Naive thymus-derived CD4-positive, alpha-beta T cell (primary cell): ENCODE measurements at regions of chr12 and their contacts with region 1.

Region 1: DNA sequence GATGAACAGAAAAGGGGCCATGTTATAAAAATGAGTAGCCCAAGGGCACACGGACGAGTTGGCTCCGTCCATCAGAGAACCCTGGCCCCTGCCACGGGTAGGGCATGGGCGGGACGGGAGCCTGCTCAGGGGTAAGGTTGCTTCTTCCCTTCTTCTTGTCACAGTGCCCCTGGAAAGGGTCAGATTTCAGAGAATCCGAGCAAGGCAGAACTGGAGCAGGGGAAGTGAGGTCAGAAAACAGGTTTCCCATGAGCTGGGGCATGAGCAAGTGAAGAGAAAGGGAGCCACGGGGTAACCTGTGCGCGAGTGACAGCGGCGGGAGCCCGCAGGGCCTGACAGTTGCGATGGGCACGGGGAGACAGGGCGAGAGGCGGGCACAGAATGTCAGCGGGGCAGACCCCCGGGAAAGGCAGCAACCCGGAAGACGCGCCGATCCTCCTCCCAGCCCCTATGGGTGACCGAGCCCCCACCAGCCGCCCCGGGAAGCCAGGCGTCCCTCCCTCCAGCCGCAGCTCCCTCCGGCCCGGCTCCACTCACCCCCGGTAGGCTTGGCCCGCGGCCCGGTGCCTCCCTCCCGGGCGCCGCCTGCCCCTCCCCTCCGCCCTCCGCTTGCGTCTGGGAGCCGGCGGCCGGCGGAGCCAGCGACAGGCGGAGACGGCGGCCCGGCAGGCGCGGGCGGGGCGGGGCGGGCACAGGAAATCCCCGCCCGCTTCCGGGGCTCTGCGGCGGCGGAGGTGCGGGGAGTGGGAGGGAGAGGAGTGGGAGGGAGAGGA is at the start of gene ZNF641:
- DNase-seq: peak; percentile 74 to 85 (median 84)
- ATAC-seq: peak; percentile 95
- H3K4me3 ChIP-seq: peak within 1 kb of the TSS; percentile 77
- H3K4me3 Mint-ChIP-seq: peak within 1 kb of the TSS; percentile 91 to 99 (median 96)
- H3K27ac ChIP-seq: peak within 1 kb of the TSS; percentile 92
- H3K27ac Mint-ChIP-seq: peak within 1 kb of the TSS; percentile 89 to 99 (median 96)
- H3K4me1 ChIP-seq: peaks cover 14 to 25% of the 10 kb centered on the region in 2 donors
- H3K4me1 Mint-ChIP-seq: peaks cover 25 to 61% (median 49%) of the 10 kb centered on the region in 7 donors
- H3K27me3 ChIP-seq: peaks cover 0 to 5% of the 10 kb centered on the region in 2 donors
- H3K27me3 Mint-ChIP-seq: peaks cover 0 to 12% (median 0%) of the 10 kb centered on the region in 5 donors
- total RNA-seq, gene ZNF641: 22.1 to 50.3 (median 30.1) TPM

Region 2: GRCh38 chr12:48157018-48157888 is 193.2 kb before region 1 on chr12 and contains the start of gene ASB8:
- CTCF ChIA-PET with region 1: no interaction called
- POLR2A ChIA-PET with region 1: interaction called, 8 read pairs
- intact Hi-C with region 1: loop called (anchors 1 to 2 kb)
- DNase-seq: peak; percentile 95 to 99 (median 98)
- ATAC-seq: peak; percentile 98
- H3K4me3 ChIP-seq: peak within 1 kb of the TSS; percentile 97
- H3K4me3 Mint-ChIP-seq: peak within 1 kb of the TSS; percentile 90 to 99 (median 97)
- H3K27ac ChIP-seq: peak within 1 kb of the TSS; percentile 84
- H3K27ac Mint-ChIP-seq: peak within 1 kb of the TSS; percentile 95 to 99 (median 99)
- H3K4me1 ChIP-seq: peaks cover 8 to 20% of the 10 kb centered on the region in 2 donors
- H3K4me1 Mint-ChIP-seq: peaks cover 22 to 65% (median 56%) of the 10 kb centered on the region in 7 donors
- H3K27me3 ChIP-seq: no peaks in the 10 kb centered on the region
- H3K27me3 Mint-ChIP-seq: peaks cover 0 to 5% (median 0%) of the 10 kb centered on the region in 5 donors
- total RNA-seq, gene ASB8: 42.9 to 75.9 (median 54.9) TPM

Region 3: GRCh38 chr12:48197971-48198671 is 152.3 kb before region 1 on chr12:
- CTCF ChIA-PET with region 1: no interaction called
- POLR2A ChIA-PET with region 1: interaction called, 31 read pairs
- intact Hi-C with region 1: loop called (anchors 1 kb)
- DNase-seq: peak; percentile 75 to 88 (median 86)
- ATAC-seq: peak; percentile 97
- H3K4me3 ChIP-seq: peak overlapping the region; percentile 89
- H3K4me3 Mint-ChIP-seq: peak overlapping the region; percentile 83 to 96 (median 92)
- H3K27ac ChIP-seq: peak overlapping the region; percentile 98
- H3K27ac Mint-ChIP-seq: peak overlapping the region; percentile 94 to 99 (median 96)
- H3K4me1 ChIP-seq: peaks cover 28% of the 10 kb centered on the region in 2 donors
- H3K4me1 Mint-ChIP-seq: peaks cover 31 to 53% (median 48%) of the 10 kb centered on the region in 7 donors
- H3K27me3 ChIP-seq: no peaks in the 10 kb centered on the region
- H3K27me3 Mint-ChIP-seq: peaks cover 0 to 28% (median 0%) of the 10 kb centered on the region in 5 donors

Region 4: DNA sequence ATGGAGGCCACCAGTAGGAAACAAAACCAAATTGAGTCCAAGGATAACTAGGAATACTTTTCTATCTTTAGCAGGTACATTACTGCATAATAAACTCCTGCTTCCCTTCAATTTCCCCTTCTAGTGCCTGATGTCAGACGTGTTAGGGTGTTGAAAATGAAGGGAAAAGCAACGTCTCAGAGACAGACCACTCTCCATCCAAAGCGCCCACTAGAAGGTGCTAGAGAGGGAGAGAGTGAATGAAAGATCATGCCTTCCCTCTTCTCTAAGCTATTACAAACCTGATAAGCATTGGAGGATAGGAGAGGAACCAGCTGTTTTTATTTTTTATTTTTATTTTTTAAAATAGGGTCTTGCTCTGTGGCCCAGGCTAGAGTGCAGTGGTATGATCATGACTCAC is 63.8 kb before region 1 on chr12:
- CTCF ChIA-PET with region 1: no interaction called
- POLR2A ChIA-PET with region 1: interaction called, 6 read pairs
- intact Hi-C with region 1: loop called in 1 of 2 experiments (anchors 1 kb)
- DNase-seq: no peak
- ATAC-seq: peak; percentile 26
- H3K4me3 ChIP-seq: no peak overlapping the region
- H3K4me3 Mint-ChIP-seq: peak overlapping the region in 6 of 10 donors; percentile 8 to 74 (median 57)
- H3K27ac ChIP-seq: no peak overlapping the region
- H3K27ac Mint-ChIP-seq: peak overlapping the region; percentile 71 to 95 (median 88)
- H3K4me1 ChIP-seq: peaks cover 12 to 14% of the 10 kb centered on the region in 2 donors
- H3K4me1 Mint-ChIP-seq: peaks cover 10 to 23% (median 19%) of the 10 kb centered on the region in 7 donors
- H3K27me3 ChIP-seq: no peaks in the 10 kb centered on the region
- H3K27me3 Mint-ChIP-seq: peaks cover 0 to 12% (median 0%) of the 10 kb centered on the region in 5 donors

Region 5: GRCh38 chr12:48414021-48414420 is 63.6 kb after region 1 on chr12:
- CTCF ChIA-PET with region 1: no interaction called
- POLR2A ChIA-PET with region 1: interaction called, 4 read pairs
- intact Hi-C with region 1: loop called in 1 of 2 experiments (anchors 2 kb)
- DNase-seq: no peak
- ATAC-seq: no peak
- H3K4me3 ChIP-seq: no peak overlapping the region
- H3K4me3 Mint-ChIP-seq: no peak overlapping the region
- H3K27ac ChIP-seq: no peak overlapping the region
- H3K27ac Mint-ChIP-seq: no peak overlapping the region
- H3K4me1 ChIP-seq: peaks cover 16 to 17% of the 10 kb centered on the region in 2 donors
- H3K4me1 Mint-ChIP-seq: peaks cover 6 to 22% (median 18%) of the 10 kb centered on the region in 7 donors
- H3K27me3 ChIP-seq: peaks cover 0 to 5% of the 10 kb centered on the region in 2 donors
- H3K27me3 Mint-ChIP-seq: peaks cover 0 to 32% (median 7%) of the 10 kb centered on the region in 5 donors

Region 6: DNA sequence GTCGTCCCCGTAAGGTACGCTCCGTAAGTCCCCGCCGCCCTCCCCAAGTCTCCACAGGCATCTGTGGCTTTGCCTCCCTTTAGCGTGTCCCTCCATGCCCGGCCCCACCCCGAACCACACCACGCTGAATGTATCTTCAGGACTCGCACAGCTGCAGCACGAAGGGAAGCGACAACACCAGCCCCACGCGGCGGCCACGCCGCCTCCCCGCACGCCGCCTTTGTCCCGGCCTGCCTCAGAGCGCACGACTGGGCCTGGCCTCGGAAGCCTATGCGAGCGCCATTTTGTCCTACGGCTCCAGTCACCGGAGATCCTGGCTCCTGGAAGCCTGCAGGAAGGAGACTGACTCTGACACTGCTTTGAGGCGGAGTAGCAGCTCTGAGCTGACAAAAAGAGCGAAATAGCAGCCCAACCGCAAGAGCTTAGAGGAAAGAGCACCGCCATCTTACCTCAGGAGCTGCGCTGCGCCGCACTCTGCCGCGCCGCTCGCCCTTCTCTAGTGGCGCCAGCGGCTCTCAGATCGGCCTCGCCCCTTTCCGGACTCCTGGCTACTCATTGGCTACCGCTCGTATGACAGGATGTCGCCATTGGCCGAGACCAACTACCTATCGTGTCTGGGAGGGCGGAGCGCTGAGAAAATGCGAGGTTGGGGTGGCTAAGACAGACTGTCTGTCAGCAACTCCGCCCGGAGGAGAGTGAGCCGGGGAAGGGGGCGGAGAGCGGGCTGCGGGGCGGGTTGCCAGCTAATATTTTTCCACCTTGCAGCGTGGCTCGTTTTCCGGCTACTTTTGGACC is 331.5 kb after region 1 on chr12 and contains the start of gene KANSL2:
- CTCF ChIA-PET with region 1: no interaction called
- POLR2A ChIA-PET with region 1: no interaction called
- intact Hi-C with region 1: loop called in 1 of 2 experiments (anchors 2 kb)
- DNase-seq: peak; percentile 79 to 98 (median 96)
- ATAC-seq: peak; percentile 97
- H3K4me3 ChIP-seq: peak within 1 kb of the TSS; percentile 88
- H3K4me3 Mint-ChIP-seq: peak within 1 kb of the TSS; percentile 93 to 99 (median 97)
- H3K27ac ChIP-seq: peak within 1 kb of the TSS; percentile 90
- H3K27ac Mint-ChIP-seq: peak within 1 kb of the TSS; percentile 97 to 99 (median 98)
- H3K4me1 ChIP-seq: peaks cover 30 to 38% of the 10 kb centered on the region in 2 donors
- H3K4me1 Mint-ChIP-seq: peaks cover 32 to 59% (median 53%) of the 10 kb centered on the region in 7 donors
- H3K27me3 ChIP-seq: no peaks in the 10 kb centered on the region
- H3K27me3 Mint-ChIP-seq: no peaks in the 10 kb centered on the region
- total RNA-seq, gene KANSL2: 37.5 to 117 (median 74.4) TPM